Naive thymus-derived CD4-positive, alpha-beta T cell (primary cell): ENCODE measurements at regions of chr16 and their contacts with region 1.

Region 1: GRCh38 chr16:68396481-68396880 is 51.8 kb downstream of the SMPD3 start:
- DNase-seq: peak in 7 of 9 donors; percentile 52 to 76 (median 69)
- ATAC-seq: peak; percentile 84
- H3K4me3 ChIP-seq: no peak overlapping the region
- H3K4me3 Mint-ChIP-seq: no peak overlapping the region
- H3K27ac ChIP-seq: no peak overlapping the region
- H3K27ac Mint-ChIP-seq: peak overlapping the region in 8 of 9 donors; percentile 8 to 57 (median 43)
- H3K4me1 ChIP-seq: peaks cover 11 to 14% of the 10 kb centered on the region in 2 donors
- H3K4me1 Mint-ChIP-seq: peaks cover 8 to 29% (median 23%) of the 10 kb centered on the region in 7 donors
- H3K27me3 ChIP-seq: no peaks in the 10 kb centered on the region
- H3K27me3 Mint-ChIP-seq: peaks cover 0 to 32% (median 0%) of the 10 kb centered on the region in 5 donors

Region 2: DNA sequence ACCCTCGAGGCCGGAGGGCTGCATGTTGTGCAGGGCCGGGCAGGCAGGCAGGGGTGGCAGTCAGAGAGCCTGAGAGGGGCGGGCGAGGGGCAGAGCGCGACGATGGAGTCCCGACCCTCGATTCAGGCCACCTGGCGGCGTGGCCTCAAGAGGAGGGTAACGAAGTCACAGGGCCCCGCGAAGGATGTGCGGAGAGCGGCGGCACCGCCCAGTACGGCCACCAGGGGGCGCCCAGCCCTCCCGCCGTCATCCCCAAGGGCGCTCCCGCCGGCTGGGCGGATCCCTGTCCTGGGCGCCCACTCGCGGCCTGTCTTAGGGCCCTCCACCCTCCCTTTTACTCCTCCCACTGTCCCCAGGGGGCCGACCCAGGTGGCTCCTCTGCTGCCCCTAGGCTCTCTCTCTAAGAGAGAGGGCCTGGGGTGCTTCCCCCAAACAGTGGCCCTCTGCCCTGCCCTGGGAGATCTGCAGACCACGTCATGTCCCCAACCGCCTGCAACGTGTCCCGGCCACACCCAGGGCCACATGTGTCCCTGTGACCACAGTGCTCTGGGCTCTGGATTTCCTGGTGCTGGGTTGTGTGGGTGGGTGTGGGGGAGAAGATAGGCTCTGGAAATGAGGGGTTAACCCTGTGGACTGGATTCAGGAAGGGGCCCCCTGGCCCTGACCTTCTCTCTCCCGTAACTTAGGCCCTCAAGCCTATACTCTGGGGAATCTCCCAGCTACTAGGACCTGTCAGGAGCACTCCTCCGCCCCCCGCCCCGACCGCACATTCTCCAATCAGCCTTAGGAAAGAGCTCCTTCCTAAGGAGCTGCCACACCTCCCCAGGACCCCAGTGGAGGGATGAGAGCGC is 403.1 kb before region 1 on chr16:
- CTCF ChIA-PET with region 1: no interaction called
- POLR2A ChIA-PET with region 1: no interaction called
- intact Hi-C with region 1: no loop called
- DNase-seq: peak; percentile 74 to 90 (median 83)
- ATAC-seq: peak; percentile 93
- H3K4me3 ChIP-seq: peak overlapping the region; percentile 65
- H3K4me3 Mint-ChIP-seq: peak overlapping the region; percentile 83 to 94 (median 92)
- H3K27ac ChIP-seq: peak overlapping the region; percentile 87
- H3K27ac Mint-ChIP-seq: peak overlapping the region; percentile 93 to 99 (median 97)
- H3K4me1 ChIP-seq: peaks cover 8 to 25% of the 10 kb centered on the region in 2 donors
- H3K4me1 Mint-ChIP-seq: peaks cover 10 to 48% (median 35%) of the 10 kb centered on the region in 7 donors
- H3K27me3 ChIP-seq: no peaks in the 10 kb centered on the region
- H3K27me3 Mint-ChIP-seq: no peaks in the 10 kb centered on the region

Region 3: GRCh38 chr16:68200088-68200783 is 196.2 kb before region 1 on chr16:
- CTCF ChIA-PET with region 1: no interaction called
- POLR2A ChIA-PET with region 1: no interaction called
- intact Hi-C with region 1: no loop called
- DNase-seq: no peak
- ATAC-seq: no peak
- H3K4me3 ChIP-seq: no peak overlapping the region
- H3K4me3 Mint-ChIP-seq: no peak overlapping the region
- H3K27ac ChIP-seq: no peak overlapping the region
- H3K27ac Mint-ChIP-seq: peak overlapping the region in 8 of 9 donors; percentile 7 to 78 (median 24)
- H3K4me1 ChIP-seq: no peaks in the 10 kb centered on the region
- H3K4me1 Mint-ChIP-seq: peaks cover 4 to 42% (median 20%) of the 10 kb centered on the region in 7 donors
- H3K27me3 ChIP-seq: no peaks in the 10 kb centered on the region
- H3K27me3 Mint-ChIP-seq: no peaks in the 10 kb centered on the region

Region 4: DNA sequence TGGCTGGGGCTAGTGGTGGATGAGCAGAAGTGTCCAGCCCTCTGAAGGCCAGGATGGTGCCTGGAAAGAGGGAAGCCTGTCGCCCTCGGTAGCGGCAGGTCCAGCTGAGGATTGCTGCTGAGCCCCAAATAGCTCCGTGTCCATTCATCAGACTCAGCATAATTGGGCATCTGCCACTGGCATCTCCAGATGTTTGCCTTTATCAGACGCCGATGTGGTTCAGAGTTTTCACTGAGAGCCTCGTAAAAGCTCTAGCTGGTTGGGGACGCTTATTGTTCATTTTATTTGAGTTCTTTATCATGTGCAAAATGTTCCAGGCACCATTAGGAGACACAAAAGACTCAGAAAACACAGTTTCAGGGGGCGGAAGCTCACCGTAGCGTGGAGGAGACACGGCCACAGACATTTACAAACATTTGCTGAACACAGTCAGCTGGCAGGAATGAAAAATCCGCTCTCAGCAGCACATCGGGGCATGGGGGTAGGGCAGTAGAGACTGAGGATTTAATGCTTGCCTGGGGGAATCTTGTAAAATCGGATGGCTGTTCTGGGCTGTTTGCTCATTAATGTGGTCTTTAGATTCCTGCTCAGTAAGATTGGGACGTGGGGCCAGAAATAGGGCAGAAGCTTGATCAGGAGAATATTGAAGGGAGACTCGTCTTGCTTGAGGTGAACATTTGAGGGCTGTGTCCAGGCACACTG is 10.1 kb after region 1 on chr16:
- CTCF ChIA-PET with region 1: interaction called, 10 read pairs
- POLR2A ChIA-PET with region 1: interaction called, 6 read pairs
- intact Hi-C with region 1: no loop called
- DNase-seq: no peak
- ATAC-seq: no peak
- H3K4me3 ChIP-seq: no peak overlapping the region
- H3K4me3 Mint-ChIP-seq: no peak overlapping the region
- H3K27ac ChIP-seq: no peak overlapping the region
- H3K27ac Mint-ChIP-seq: peak overlapping the region in 1 of 9 donors; percentile 28
- H3K4me1 ChIP-seq: peaks cover 3 to 5% of the 10 kb centered on the region in 2 donors
- H3K4me1 Mint-ChIP-seq: peaks cover 0 to 11% (median 5%) of the 10 kb centered on the region in 7 donors
- H3K27me3 ChIP-seq: no peaks in the 10 kb centered on the region
- H3K27me3 Mint-ChIP-seq: peaks cover 0 to 29% (median 0%) of the 10 kb centered on the region in 5 donors

Region 5: DNA sequence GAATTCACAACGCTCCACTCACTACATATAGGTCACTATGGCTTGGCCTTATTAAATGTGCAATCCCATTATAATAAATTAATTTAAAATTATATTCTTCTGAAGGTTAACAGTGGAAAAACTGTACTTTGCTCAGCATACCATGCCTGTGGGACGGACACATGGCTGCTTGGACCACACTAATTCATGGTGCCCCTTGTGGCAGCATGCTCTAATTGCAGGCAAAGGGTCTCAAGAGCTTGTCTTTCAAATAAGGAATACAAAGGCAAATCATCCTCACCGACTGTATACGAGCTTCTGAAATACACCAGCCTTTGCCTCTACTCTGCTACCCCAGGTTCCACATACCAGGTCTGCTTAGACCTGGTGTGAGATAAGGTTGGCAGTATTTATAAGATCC is 40.1 kb after region 1 on chr16:
- CTCF ChIA-PET with region 1: interaction called, 10 read pairs
- POLR2A ChIA-PET with region 1: interaction called, 3 read pairs
- intact Hi-C with region 1: no loop called
- DNase-seq: no peak
- ATAC-seq: no peak
- H3K4me3 ChIP-seq: no peak overlapping the region
- H3K4me3 Mint-ChIP-seq: no peak overlapping the region
- H3K27ac ChIP-seq: no peak overlapping the region
- H3K27ac Mint-ChIP-seq: no peak overlapping the region
- H3K4me1 ChIP-seq: peaks cover 0 to 16% of the 10 kb centered on the region in 2 donors
- H3K4me1 Mint-ChIP-seq: peaks cover 7 to 30% (median 26%) of the 10 kb centered on the region in 7 donors
- H3K27me3 ChIP-seq: no peaks in the 10 kb centered on the region
- H3K27me3 Mint-ChIP-seq: peaks cover 0 to 47% (median 4%) of the 10 kb centered on the region in 5 donors

Region 6: DNA sequence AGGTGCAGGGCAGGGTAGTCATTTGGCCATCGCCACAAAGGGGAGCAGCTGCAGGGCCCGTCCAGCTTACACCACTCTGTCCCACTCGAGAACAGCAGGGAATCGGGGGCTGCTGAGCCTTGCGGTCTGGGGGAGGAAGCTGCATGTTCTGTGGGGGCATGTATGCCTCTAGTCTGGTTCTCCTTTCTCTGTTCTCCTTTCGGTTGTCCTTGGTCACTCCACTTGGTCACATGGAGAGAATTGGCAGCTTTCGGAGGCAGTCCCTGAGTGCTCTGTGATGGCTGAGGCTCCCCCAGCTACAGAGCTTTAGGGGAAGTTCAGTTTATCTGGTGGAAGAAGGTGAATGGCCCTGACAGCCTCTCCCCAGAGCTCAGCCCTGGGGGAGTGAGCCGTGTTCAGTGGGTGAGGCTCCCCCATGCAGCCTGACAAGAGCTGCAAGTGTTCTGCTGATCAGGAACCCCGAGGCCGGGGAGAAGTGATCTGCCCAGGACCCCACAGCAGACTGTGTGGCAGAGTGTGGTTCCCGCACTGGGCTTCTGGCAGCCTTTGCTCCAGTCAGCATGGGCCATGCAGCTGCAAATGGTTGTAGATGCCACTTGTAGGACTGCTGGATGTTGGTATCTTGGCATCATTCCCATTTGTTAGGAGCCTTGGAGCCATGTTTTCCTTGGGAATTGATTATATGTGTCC is 74.1 kb after region 1 on chr16:
- CTCF ChIA-PET with region 1: interaction called, 5 read pairs
- POLR2A ChIA-PET with region 1: no interaction called
- intact Hi-C with region 1: loop called in 1 of 2 experiments (anchors 1 kb)
- DNase-seq: no peak
- ATAC-seq: peak; percentile 91
- H3K4me3 ChIP-seq: peak overlapping the region; percentile 68
- H3K4me3 Mint-ChIP-seq: peak overlapping the region; percentile 78 to 92 (median 86)
- H3K27ac ChIP-seq: peak overlapping the region; percentile 48
- H3K27ac Mint-ChIP-seq: peak overlapping the region; percentile 73 to 95 (median 87)
- H3K4me1 ChIP-seq: peaks cover 21 to 38% of the 10 kb centered on the region in 2 donors
- H3K4me1 Mint-ChIP-seq: peaks cover 38 to 53% (median 49%) of the 10 kb centered on the region in 7 donors
- H3K27me3 ChIP-seq: no peaks in the 10 kb centered on the region
- H3K27me3 Mint-ChIP-seq: peaks cover 0 to 15% (median 0%) of the 10 kb centered on the region in 5 donors

Region 7: GRCh38 chr16:68512183-68512582 is 115.7 kb after region 1 on chr16:
- CTCF ChIA-PET with region 1: interaction called, 76 read pairs
- POLR2A ChIA-PET with region 1: interaction called, 4 read pairs
- intact Hi-C with region 1: loop called (anchors 1 kb)
- DNase-seq: peak in 1 of 9 donors; percentile 1
- ATAC-seq: no peak
- H3K4me3 ChIP-seq: no peak overlapping the region
- H3K4me3 Mint-ChIP-seq: peak overlapping the region in 1 of 10 donors; percentile 41
- H3K27ac ChIP-seq: no peak overlapping the region
- H3K27ac Mint-ChIP-seq: peak overlapping the region in 1 of 9 donors; percentile 10
- H3K4me1 ChIP-seq: peaks cover 0 to 3% of the 10 kb centered on the region in 2 donors
- H3K4me1 Mint-ChIP-seq: peaks cover 0 to 14% (median 3%) of the 10 kb centered on the region in 7 donors
- H3K27me3 ChIP-seq: no peaks in the 10 kb centered on the region
- H3K27me3 Mint-ChIP-seq: peaks cover 0 to 25% (median 0%) of the 10 kb centered on the region in 5 donors

Region 8: GRCh38 chr16:68520649-68521086 is 124.2 kb after region 1 on chr16:
- CTCF ChIA-PET with region 1: interaction called, 14 read pairs
- POLR2A ChIA-PET with region 1: no interaction called
- intact Hi-C with region 1: loop called in 1 of 2 experiments (anchors 2 kb)
- DNase-seq: peak; percentile 70 to 91 (median 86)
- ATAC-seq: peak; percentile 100
- H3K4me3 ChIP-seq: peak overlapping the region; percentile 21
- H3K4me3 Mint-ChIP-seq: peak overlapping the region in 9 of 10 donors; percentile 49 to 73 (median 67)
- H3K27ac ChIP-seq: peak overlapping the region; percentile 20
- H3K27ac Mint-ChIP-seq: peak overlapping the region in 6 of 9 donors; percentile 68 to 92 (median 87)
- H3K4me1 ChIP-seq: peaks cover 0 to 5% of the 10 kb centered on the region in 2 donors
- H3K4me1 Mint-ChIP-seq: peaks cover 0 to 12% (median 7%) of the 10 kb centered on the region in 7 donors
- H3K27me3 ChIP-seq: no peaks in the 10 kb centered on the region
- H3K27me3 Mint-ChIP-seq: peaks cover 0 to 3% (median 0%) of the 10 kb centered on the region in 5 donors